Activated CD8-positive, alpha-beta T cell treated with anti-CD3 and anti-CD28 coated beads for 36 hours (primary cell): ENCODE measurements at regions of chr6 and their contacts with region 1.

Region 1: DNA sequence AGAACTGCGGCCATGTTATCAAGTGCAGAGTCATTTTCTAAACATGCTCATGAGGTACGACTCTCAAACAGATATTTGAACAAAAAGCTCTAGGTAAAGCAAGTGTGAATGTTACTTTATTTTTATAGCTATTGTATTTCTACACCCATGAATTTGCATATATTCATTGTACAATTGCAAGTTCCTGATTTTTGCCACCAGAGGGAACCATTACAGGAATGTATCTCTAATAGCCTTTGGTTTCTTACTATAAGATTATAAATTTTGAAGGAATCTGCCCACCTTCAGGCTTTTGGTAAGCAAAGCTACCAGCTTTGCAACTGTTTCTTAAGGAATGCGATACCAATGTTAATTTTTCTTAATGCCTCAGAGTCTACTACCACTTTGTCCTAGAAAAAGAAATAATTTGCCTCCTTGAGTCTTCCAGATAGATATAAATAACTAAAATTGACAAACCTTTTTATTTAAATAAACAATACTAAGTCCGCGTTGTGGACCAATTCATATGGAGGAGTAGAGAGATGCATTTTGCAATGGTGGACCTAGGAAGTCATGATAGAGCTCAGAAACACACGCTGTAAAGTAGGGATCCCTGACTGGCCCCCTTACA is 125.4 kb upstream of the SAMD5 start:
- DNase-seq: no peak
- ATAC-seq: no peak
- H3K4me3 Mint-ChIP-seq: no peak overlapping the region
- H3K27ac Mint-ChIP-seq: no peak overlapping the region
- H3K4me1 Mint-ChIP-seq: peaks cover 13% of the 10 kb centered on the region
- H3K27me3 Mint-ChIP-seq: no peaks in the 10 kb centered on the region
- CTCF ChIP-seq: peak; percentile 37

Region 2: GRCh38 chr6:147371325-147371724 is 11.7 kb before region 1 on chr6:
- CTCF ChIA-PET with region 1: interaction called, 10 read pairs
- POLR2A ChIA-PET with region 1: no interaction called
- intact Hi-C with region 1: no loop called
- DNase-seq: no peak
- ATAC-seq: no peak
- H3K4me3 Mint-ChIP-seq: no peak overlapping the region
- H3K27ac Mint-ChIP-seq: no peak overlapping the region
- H3K4me1 Mint-ChIP-seq: no peaks in the 10 kb centered on the region
- H3K27me3 Mint-ChIP-seq: no peaks in the 10 kb centered on the region
- CTCF ChIP-seq: no peak

Region 3: GRCh38 chr6:147434516-147434915 is 51.5 kb after region 1 on chr6:
- CTCF ChIA-PET with region 1: no interaction called
- POLR2A ChIA-PET with region 1: no interaction called
- intact Hi-C with region 1: no loop called
- DNase-seq: no peak
- ATAC-seq: no peak
- H3K4me3 Mint-ChIP-seq: no peak overlapping the region
- H3K27ac Mint-ChIP-seq: no peak overlapping the region
- H3K4me1 Mint-ChIP-seq: no peaks in the 10 kb centered on the region
- H3K27me3 Mint-ChIP-seq: peaks cover 2% of the 10 kb centered on the region
- CTCF ChIP-seq: no peak